Activated T-helper 2 cell treated with anti-CD3 and anti-CD28 coated beads, Interferon-gamma antibody, Interleukin-2, Interleukin-4, amounts not matched to agents 10 μg/mL and 5 μg/mL and 100 μg/mL, durations not matched to agents 14 hours and 24 hours and 36 hours (primary cell): ENCODE measurements at regions of chr3 and their contacts with region 1.

Region 1: DNA sequence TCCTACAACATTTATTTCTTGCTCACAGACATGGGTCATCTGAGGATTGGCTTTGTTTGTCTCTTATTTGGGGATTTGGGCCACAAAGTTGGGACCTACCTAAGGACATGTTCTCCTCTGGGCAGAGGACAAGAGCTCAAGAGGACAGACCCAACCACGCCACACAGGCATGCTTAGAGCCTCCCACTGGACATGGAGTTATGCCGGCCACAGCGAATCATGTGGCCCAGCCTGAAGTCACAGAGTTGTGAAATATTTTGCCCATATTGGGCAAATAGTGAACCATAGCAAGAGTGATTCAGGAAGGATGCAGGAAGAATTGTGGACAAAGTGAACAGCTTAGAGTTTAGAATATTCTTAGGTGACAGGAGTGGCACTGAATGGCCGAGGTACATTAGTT is 9.9 kb downstream of the TRAK1 start:
- DNase-seq: no peak
- H3K4me3 Mint-ChIP-seq: no peak overlapping the region
- H3K27ac Mint-ChIP-seq: no peak overlapping the region
- H3K4me1 Mint-ChIP-seq: peaks cover 26% of the 10 kb centered on the region
- H3K27me3 Mint-ChIP-seq: no peaks in the 10 kb centered on the region

Region 2: GRCh38 chr3:41893977-41894376 is 207.1 kb before region 1 on chr3:
- intact Hi-C with region 1: loop called (anchors 1 kb)
- DNase-seq: no peak
- H3K4me3 Mint-ChIP-seq: no peak overlapping the region
- H3K27ac Mint-ChIP-seq: no peak overlapping the region
- H3K4me1 Mint-ChIP-seq: no peaks in the 10 kb centered on the region
- H3K27me3 Mint-ChIP-seq: no peaks in the 10 kb centered on the region

Region 3: GRCh38 chr3:41961750-41962679 is 139.0 kb before region 1 on chr3 and contains the start of gene ULK4:
- intact Hi-C with region 1: loop called (anchors 1 kb)
- DNase-seq: peak; percentile 94
- H3K4me3 Mint-ChIP-seq: peak within 1 kb of the TSS; percentile 96
- H3K27ac Mint-ChIP-seq: peak within 1 kb of the TSS; percentile 90
- H3K4me1 Mint-ChIP-seq: peaks cover 19% of the 10 kb centered on the region
- H3K27me3 Mint-ChIP-seq: peaks cover under 1% of the 10 kb centered on the region
- total RNA-seq, gene ULK4: 7.5 and 8.1 TPM in 2 replicates